ENCODE measurements at regions of chr21 and their contacts with region 1.

Region 1: GRCh38 chr21:39388038-39388810 is 39.3 kb upstream of the HMGN1 start:
- DNase-seq: peak; percentile 93
- H3K4me3 Mint-ChIP-seq: peak overlapping the region; percentile 86
- H3K27ac Mint-ChIP-seq: peak overlapping the region; percentile 91
- H3K4me1 Mint-ChIP-seq: peaks cover 32% of the 10 kb centered on the region
- H3K27me3 Mint-ChIP-seq: no peaks in the 10 kb centered on the region

Region 2: DNA sequence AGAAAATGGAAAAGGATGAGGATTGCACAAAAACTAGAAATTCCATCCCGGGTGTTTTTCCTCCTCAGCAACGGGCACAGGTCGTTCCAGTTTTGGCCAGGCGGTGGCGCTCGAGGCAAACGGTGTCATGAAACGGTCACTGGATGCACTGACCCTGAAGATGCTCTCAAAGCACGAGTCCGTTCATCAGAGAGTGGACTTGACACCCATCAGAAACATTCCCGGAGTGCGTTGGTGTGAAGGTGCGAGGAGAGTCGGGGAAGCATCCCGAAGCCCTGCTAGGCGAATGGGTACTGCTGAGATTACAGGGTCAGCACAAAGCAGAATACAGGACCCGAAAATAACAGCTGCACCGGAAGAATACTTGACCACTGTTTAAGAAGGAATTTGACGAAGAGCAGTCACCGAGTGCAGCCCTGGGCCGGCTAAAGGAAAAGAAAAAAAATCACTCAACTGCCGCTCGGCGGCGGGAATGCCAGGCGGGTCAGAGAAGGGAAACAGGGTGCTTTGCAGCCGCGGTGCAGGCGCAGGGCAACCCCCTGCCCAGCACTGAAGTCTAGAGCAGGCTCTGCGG is 654.2 kb before region 1 on chr21:
- CTCF ChIA-PET with region 1: no interaction called
- intact Hi-C with region 1: loop called (anchors 5 kb)
- DNase-seq: peak; percentile 77
- H3K4me3 Mint-ChIP-seq: peak overlapping the region; percentile 69
- H3K27ac Mint-ChIP-seq: no peak overlapping the region
- H3K4me1 Mint-ChIP-seq: peaks cover 8% of the 10 kb centered on the region
- H3K27me3 Mint-ChIP-seq: peaks cover 17% of the 10 kb centered on the region

Region 3: GRCh38 chr21:38805328-38806152 is 582.7 kb before region 1 on chr21 and contains the start of gene ETS2:
- CTCF ChIA-PET with region 1: no interaction called
- intact Hi-C with region 1: loop called (anchors 1 kb)
- DNase-seq: peak; percentile 84
- H3K4me3 Mint-ChIP-seq: peak within 1 kb of the TSS; percentile 90
- H3K27ac Mint-ChIP-seq: peak within 1 kb of the TSS; percentile 91
- H3K4me1 Mint-ChIP-seq: peaks cover 33% of the 10 kb centered on the region
- H3K27me3 Mint-ChIP-seq: no peaks in the 10 kb centered on the region
- total RNA-seq, gene ETS2: 22.4 to 25.6 TPM

Region 4: DNA sequence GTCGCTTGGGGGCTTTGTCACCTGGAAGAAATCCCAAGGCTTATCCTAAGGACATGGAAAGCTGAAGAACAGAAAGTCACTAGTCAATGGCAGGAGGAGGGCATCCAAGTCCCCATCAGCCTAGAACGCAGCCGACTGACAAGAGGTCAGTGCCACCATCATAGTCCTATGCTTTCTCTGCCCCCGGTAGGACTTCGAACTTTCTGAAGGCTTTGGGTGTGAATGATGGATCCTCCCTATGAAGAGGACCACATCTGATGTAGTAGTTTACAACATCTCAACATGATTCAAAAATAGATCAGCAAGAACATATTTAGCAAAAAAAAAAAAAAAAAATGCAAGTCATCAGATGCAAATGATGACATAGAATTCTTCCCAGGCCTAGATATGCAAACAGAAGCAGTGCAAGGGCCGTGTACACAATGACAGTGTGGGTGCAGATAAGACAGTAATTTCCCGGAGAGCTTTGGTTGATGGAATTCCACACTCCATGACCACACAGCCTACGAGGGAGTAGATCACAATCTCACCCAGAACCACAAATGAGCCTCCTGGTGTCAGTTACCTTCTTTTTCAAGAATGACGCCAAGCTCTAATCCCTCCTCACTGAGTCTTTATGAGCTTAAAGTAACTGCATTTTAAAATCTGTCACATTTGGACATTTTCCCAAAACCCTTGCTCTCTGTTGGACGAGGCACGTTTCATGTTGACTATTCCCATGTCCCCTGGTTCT is 293.2 kb before region 1 on chr21:
- CTCF ChIA-PET with region 1: no interaction called
- intact Hi-C with region 1: loop called (anchors 5 kb)
- DNase-seq: no peak
- H3K4me3 Mint-ChIP-seq: no peak overlapping the region
- H3K27ac Mint-ChIP-seq: no peak overlapping the region
- H3K4me1 Mint-ChIP-seq: no peaks in the 10 kb centered on the region
- H3K27me3 Mint-ChIP-seq: no peaks in the 10 kb centered on the region

Region 5: GRCh38 chr21:39183237-39184007 is 204.8 kb before region 1 on chr21 and contains the start of gene PSMG1:
- CTCF ChIA-PET with region 1: interaction called, 5 read pairs
- intact Hi-C with region 1: loop called (anchors 1 kb)
- DNase-seq: peak; percentile 94
- H3K4me3 Mint-ChIP-seq: peak within 1 kb of the TSS; percentile 92
- H3K27ac Mint-ChIP-seq: peak within 1 kb of the TSS; percentile 90
- H3K4me1 Mint-ChIP-seq: peaks cover 62% of the 10 kb centered on the region
- H3K27me3 Mint-ChIP-seq: no peaks in the 10 kb centered on the region
- total RNA-seq, gene PSMG1: 70.8 to 70.9 TPM

Region 6: GRCh38 chr21:39238275-39238674 is 149.9 kb before region 1 on chr21:
- CTCF ChIA-PET with region 1: no interaction called
- intact Hi-C with region 1: no loop called
- DNase-seq: no peak
- H3K4me3 Mint-ChIP-seq: no peak overlapping the region
- H3K27ac Mint-ChIP-seq: peak overlapping the region; percentile 7
- H3K4me1 Mint-ChIP-seq: peaks cover 34% of the 10 kb centered on the region
- H3K27me3 Mint-ChIP-seq: no peaks in the 10 kb centered on the region

Region 7: DNA sequence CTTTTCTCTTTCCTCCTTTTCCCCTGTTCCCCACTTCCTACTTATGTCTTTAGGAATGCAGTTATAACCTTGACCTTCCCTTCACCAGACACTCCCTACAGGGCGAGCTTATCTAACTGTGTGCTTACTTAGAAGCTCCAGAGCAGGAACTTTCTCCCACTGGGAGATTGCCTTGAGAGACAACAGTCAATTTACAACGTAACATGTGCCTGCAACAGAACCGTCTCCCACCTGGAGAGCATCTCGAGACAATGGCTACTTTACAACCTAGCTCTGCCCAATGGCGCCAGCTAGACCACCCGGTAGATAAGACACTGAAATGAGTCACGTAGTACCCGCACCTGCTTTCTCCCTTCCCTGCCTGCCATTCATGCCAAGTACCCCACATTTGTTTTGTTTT is 56.0 kb before region 1 on chr21:
- CTCF ChIA-PET with region 1: no interaction called
- intact Hi-C with region 1: no loop called
- DNase-seq: no peak
- H3K4me3 Mint-ChIP-seq: no peak overlapping the region
- H3K27ac Mint-ChIP-seq: no peak overlapping the region
- H3K4me1 Mint-ChIP-seq: no peaks in the 10 kb centered on the region
- H3K27me3 Mint-ChIP-seq: no peaks in the 10 kb centered on the region

Region 8: DNA sequence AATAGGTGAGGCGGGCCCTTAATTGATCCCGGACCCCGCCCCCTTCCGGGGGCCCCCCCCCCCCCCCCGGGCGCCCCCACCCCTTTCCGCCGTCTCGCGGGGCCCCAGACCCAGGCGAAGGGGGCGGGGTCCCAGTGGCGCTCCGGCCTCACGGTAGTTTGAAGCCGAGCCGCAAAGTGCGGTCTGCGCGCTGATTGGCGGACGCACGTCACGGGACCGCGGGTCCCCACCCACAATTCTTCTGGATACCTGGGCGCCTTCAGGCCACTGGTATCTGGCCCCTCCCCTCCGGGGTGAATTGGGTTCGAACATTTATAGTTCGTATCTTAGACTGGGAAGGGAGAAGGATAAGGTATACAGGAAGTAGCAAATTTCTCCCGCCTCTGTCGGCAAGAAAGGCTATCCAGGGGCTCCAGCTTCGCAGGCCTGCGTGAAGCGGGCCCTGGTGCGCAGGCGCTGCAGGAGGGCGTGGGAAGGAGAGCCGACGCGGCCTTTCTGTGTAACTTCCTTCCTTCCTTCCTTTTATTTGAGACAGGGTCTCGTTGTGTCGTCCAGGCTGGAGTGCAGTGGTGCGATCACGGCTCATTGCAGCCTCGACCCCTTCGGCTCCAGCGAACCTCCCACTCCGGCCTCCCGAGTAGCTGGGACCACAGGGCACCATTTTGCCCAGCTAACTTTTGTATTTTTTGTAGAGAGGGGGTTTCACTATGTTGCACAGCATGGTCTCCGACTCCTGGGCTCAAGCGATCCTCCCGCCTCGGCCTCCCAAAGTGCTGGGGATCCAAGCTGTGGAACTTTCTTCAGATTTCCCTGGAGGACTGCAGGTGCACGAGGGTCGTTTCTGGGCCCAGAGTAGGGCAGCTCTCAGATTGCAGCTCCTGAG is 38.8 kb before region 1 on chr21:
- CTCF ChIA-PET with region 1: interaction called, 8 read pairs
- intact Hi-C with region 1: loop called (anchors 1 kb)
- DNase-seq: peak; percentile 98
- H3K4me3 Mint-ChIP-seq: peak overlapping the region; percentile 99
- H3K27ac Mint-ChIP-seq: peak overlapping the region; percentile 99
- H3K4me1 Mint-ChIP-seq: peaks cover 32% of the 10 kb centered on the region
- H3K27me3 Mint-ChIP-seq: no peaks in the 10 kb centered on the region

Region 9: GRCh38 chr21:39445321-39446269 is 57.4 kb after region 1 on chr21 and contains the start of gene LCA5L:
- CTCF ChIA-PET with region 1: interaction called, 4 read pairs
- intact Hi-C with region 1: loop called (anchors 1 kb)
- DNase-seq: peak; percentile 86
- H3K4me3 Mint-ChIP-seq: peak within 1 kb of the TSS; percentile 95
- H3K27ac Mint-ChIP-seq: peak within 1 kb of the TSS; percentile 94
- H3K4me1 Mint-ChIP-seq: peaks cover 23% of the 10 kb centered on the region
- H3K27me3 Mint-ChIP-seq: peaks cover 9% of the 10 kb centered on the region
- total RNA-seq, gene LCA5L: 0.26 TPM in 1 of 2 experiments, not detected in the other

Region 10: DNA sequence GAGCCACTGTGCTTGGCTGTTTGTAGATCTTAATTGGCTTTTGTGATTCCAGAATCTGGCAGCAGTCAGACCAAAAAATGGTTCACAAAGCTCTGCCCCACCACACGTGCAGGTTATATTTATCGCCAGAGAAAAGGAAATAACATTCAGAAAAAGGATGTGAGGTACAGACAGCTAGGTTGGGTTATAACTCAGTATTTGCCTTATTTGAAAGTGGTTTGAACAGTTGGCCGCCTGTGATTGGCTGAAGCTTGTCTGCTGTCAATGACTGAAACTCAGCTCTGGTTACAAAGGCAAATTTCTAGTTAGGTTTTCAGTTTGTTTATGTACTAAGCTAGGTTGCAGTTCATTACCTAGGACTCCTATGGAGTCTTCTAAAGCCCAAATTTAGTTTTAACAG is 73.2 kb after region 1 on chr21:
- CTCF ChIA-PET with region 1: no interaction called
- intact Hi-C with region 1: no loop called
- DNase-seq: peak; percentile 10
- H3K4me3 Mint-ChIP-seq: no peak overlapping the region
- H3K27ac Mint-ChIP-seq: no peak overlapping the region
- H3K4me1 Mint-ChIP-seq: peaks cover 2% of the 10 kb centered on the region
- H3K27me3 Mint-ChIP-seq: no peaks in the 10 kb centered on the region

Region 11: DNA sequence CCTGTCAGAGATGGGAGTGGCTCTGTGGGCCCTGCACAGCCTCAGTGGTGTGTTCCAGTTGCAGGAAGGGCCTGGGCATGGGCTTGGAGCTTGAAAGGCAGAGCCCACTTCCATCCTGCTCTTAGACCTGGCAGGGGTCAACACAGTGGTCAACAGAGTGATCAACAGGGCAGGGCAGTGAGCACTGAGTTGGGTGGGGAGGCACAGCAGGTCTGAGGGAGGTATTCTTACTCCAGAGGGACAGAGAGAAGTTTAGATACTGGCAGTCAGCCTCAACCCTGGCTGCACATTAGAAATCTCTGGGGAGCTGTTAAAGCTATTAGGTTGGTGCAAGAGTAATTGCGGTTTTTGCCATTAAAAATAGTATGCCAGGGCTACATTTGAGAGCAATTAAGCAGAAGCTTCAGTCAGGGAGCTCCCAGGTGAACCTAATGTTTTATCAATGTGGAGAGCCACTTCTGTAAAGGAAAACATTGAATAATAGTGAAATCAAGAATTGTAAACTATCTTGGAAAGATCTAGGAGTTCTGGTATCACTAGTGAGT is 101.2 kb after region 1 on chr21:
- CTCF ChIA-PET with region 1: no interaction called
- intact Hi-C with region 1: no loop called
- DNase-seq: no peak
- H3K4me3 Mint-ChIP-seq: no peak overlapping the region
- H3K27ac Mint-ChIP-seq: no peak overlapping the region
- H3K4me1 Mint-ChIP-seq: no peaks in the 10 kb centered on the region
- H3K27me3 Mint-ChIP-seq: no peaks in the 10 kb centered on the region

Measured in activated naive CD4-positive, alpha-beta T cell treated with anti-CD3 and anti-CD28 coated beads for 36 hours (primary cell).